Caco-2 (cell line): ENCODE measurements at regions of chr6 and their contacts with region 1.

Region 1: GRCh38 chr6:13574149-13574570 is 241 bp upstream of the SIRT5 start:
- DNase-seq: peak; percentile 96 to 98
- H3K4me3 ChIP-seq: peak overlapping the region; percentile 67
- H3K4me3 Mint-ChIP-seq: peak overlapping the region; percentile 85
- H3K27ac Mint-ChIP-seq: peak overlapping the region; percentile 90
- H3K4me1 ChIP-seq: peaks cover 14% of the 10 kb centered on the region
- H3K4me1 Mint-ChIP-seq: peaks cover 10% of the 10 kb centered on the region
- H3K27me3 ChIP-seq: no peaks in the 10 kb centered on the region
- H3K27me3 Mint-ChIP-seq: no peaks in the 10 kb centered on the region
- CTCF ChIP-seq: peak; percentile 57 to 69

Region 2: GRCh38 chr6:13336553-13336952 is 237.6 kb before region 1 on chr6:
- CTCF ChIA-PET with region 1: no interaction called
- POLR2A ChIA-PET with region 1: no interaction called
- intact Hi-C with region 1: loop called (anchors 1 kb)
- DNase-seq: peak; percentile 73 to 82
- H3K4me3 ChIP-seq: no peak overlapping the region
- H3K4me3 Mint-ChIP-seq: no peak overlapping the region
- H3K27ac Mint-ChIP-seq: no peak overlapping the region
- H3K4me1 ChIP-seq: peaks cover 6% of the 10 kb centered on the region; the same call in 1 of the 2 replicates
- H3K4me1 Mint-ChIP-seq: peaks cover 9% of the 10 kb centered on the region
- H3K27me3 ChIP-seq: no peaks in the 10 kb centered on the region
- H3K27me3 Mint-ChIP-seq: no peaks in the 10 kb centered on the region
- CTCF ChIP-seq: peak; percentile 77 to 88

Region 3: GRCh38 chr6:13487122-13488014 is 86.8 kb before region 1 on chr6 and contains the start of gene GFOD1:
- CTCF ChIA-PET with region 1: interaction called, 12 read pairs
- POLR2A ChIA-PET with region 1: no interaction called
- intact Hi-C with region 1: loop called (anchors 5 kb)
- DNase-seq: peak; percentile 68 to 82
- H3K4me3 ChIP-seq: peak within 1 kb of the TSS; percentile 56
- H3K4me3 Mint-ChIP-seq: peak within 1 kb of the TSS; percentile 78
- H3K27ac Mint-ChIP-seq: no peak within 1 kb of the TSS
- H3K4me1 ChIP-seq: peaks cover 4% of the 10 kb centered on the region; the same call in 1 of the 2 replicates
- H3K4me1 Mint-ChIP-seq: peaks cover 7% of the 10 kb centered on the region
- H3K27me3 ChIP-seq: peaks cover 4% of the 10 kb centered on the region; the same call in 1 of the 2 replicates
- H3K27me3 Mint-ChIP-seq: peaks cover 39% of the 10 kb centered on the region
- CTCF ChIP-seq: peak in 1 of 2 experiments; percentile 14
- total RNA-seq, gene GFOD1: 0.65 and 0.84 TPM in 2 replicates

Region 4: GRCh38 chr6:13614926-13615798 is 41.0 kb after region 1 on chr6 and contains the start of gene NOL7:
- CTCF ChIA-PET with region 1: interaction called, 51 read pairs
- POLR2A ChIA-PET with region 1: interaction called, 30 read pairs
- intact Hi-C with region 1: loop called (anchors 1 kb)
- DNase-seq: peak; percentile 97 to 98
- H3K4me3 ChIP-seq: peak within 1 kb of the TSS; percentile 87
- H3K4me3 Mint-ChIP-seq: peak within 1 kb of the TSS; percentile 100
- H3K27ac Mint-ChIP-seq: peak within 1 kb of the TSS; percentile 98
- H3K4me1 ChIP-seq: no peaks in the 10 kb centered on the region; the same call in 1 of the 2 replicates
- H3K4me1 Mint-ChIP-seq: peaks cover 7% of the 10 kb centered on the region
- H3K27me3 ChIP-seq: no peaks in the 10 kb centered on the region
- H3K27me3 Mint-ChIP-seq: no peaks in the 10 kb centered on the region
- CTCF ChIP-seq: peak; percentile 70 to 91
- total RNA-seq, gene NOL7: 85.4 and 92.9 TPM in 2 replicates

Region 5: GRCh38 chr6:13624871-13625288 is 50.7 kb after region 1 on chr6:
- CTCF ChIA-PET with region 1: interaction called, 14 read pairs
- POLR2A ChIA-PET with region 1: no interaction called
- intact Hi-C with region 1: loop called (anchors 1 kb)
- DNase-seq: peak in 1 of 2 experiments; percentile 54
- H3K4me3 ChIP-seq: no peak overlapping the region
- H3K4me3 Mint-ChIP-seq: no peak overlapping the region
- H3K27ac Mint-ChIP-seq: no peak overlapping the region
- H3K4me1 ChIP-seq: peaks cover 5% of the 10 kb centered on the region
- H3K4me1 Mint-ChIP-seq: peaks cover 7% of the 10 kb centered on the region
- H3K27me3 ChIP-seq: no peaks in the 10 kb centered on the region
- H3K27me3 Mint-ChIP-seq: no peaks in the 10 kb centered on the region
- CTCF ChIP-seq: peak; percentile 56 to 57